Astrocyte of the spinal cord (primary cell): ENCODE measurements at regions of chr1 and their contacts with region 1.

Region 1: GRCh38 chr1:153967082-153968000 is at the start of gene CREB3L4:
- DNase-seq: peak; percentile 98
- H3K4me3 ChIP-seq: peak within 1 kb of the TSS; percentile 64
- CTCF ChIP-seq: peak; percentile 53

Region 2: GRCh38 chr1:153816283-153816889 is 151.0 kb before region 1 on chr1:
- in situ Hi-C with region 1: loop called (anchors 10 kb)
- DNase-seq: no peak
- H3K4me3 ChIP-seq: no peak overlapping the region
- CTCF ChIP-seq: no peak

Region 3: GRCh38 chr1:153922076-153922971 is 45.0 kb before region 1 on chr1:
- in situ Hi-C with region 1: no loop called
- DNase-seq: peak; percentile 5
- H3K4me3 ChIP-seq: peak overlapping the region; percentile 88
- CTCF ChIP-seq: peak; percentile 23

Region 4: GRCh38 chr1:154241703-154242351 is 274.5 kb after region 1 on chr1:
- in situ Hi-C with region 1: no loop called
- DNase-seq: no peak
- H3K4me3 ChIP-seq: no peak overlapping the region
- CTCF ChIP-seq: no peak